Activated CD4-positive, alpha-beta memory T cell treated with anti-CD3 and anti-CD28 coated beads, Interleukin-2, amount 10 ng/mL, durations not matched to agents 7 days and 5 days (primary cell): ENCODE measurements at regions of chr21 and their contacts with region 1.

Region 1: DNA sequence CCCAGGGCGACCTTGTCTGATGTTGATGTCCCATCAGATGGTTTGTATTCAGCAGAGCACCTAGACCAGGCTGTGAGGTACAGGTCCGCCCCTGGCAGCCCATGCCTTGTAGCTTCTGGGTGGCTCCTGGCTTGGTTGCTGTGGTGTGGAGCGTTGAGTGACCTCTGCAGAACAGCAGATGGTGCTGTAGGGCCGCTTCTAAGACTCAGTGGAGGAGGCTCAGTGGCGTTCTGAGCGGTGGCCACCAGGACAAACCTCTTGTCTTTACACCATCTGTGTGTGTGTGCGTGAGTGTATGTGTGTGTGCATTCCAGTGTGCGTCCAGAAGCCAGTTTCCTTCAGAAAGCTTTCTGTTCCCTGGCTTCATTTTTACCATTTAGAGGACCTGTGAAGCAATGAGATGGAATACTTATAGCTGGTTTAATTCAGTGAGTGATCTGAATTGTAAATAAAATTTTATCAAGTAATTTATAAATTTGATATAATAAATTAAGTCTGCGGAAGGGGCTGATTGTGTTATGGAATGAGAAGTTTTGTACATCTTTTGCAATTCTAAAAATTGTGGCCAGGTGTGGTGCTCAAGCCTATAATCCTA is 66.1 kb downstream of the ADARB1 start:
- DNase-seq: peak; percentile 82
- H3K4me3 Mint-ChIP-seq: no peak overlapping the region
- H3K27ac Mint-ChIP-seq: no peak overlapping the region
- H3K4me1 Mint-ChIP-seq: peaks cover 16% of the 10 kb centered on the region
- H3K27me3 Mint-ChIP-seq: no peaks in the 10 kb centered on the region

Region 2: DNA sequence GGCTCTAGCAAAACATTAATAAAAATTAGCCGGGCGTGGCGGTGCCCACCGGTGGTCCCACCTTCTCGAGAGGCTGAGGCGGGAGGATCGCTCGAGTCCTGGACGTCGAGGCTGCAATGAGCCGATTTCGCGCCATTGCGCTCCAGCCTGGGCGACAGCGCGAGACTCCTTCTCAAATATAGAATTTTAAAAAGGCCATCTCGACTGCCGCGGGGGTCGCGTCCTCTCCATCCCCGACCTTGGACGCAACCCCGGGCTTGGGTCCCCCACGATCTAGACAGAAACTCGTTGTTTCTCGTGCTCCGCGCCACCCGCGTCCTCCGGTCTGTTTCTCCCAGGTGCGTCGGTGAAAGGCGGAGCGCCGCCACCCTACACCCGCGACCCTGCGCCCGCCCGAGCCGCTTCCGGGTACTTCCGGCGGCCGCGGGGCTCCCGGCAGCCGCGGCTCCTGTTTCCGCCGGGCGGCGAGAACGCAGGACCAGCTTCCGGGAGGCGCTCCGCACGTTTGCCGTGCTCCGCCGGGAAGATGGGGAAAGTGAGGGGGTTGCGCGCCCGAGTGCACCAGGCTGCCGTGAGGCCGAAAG is 200.8 kb before region 1 on chr21 and contains the start of gene SLX9:
- CTCF ChIA-PET with region 1: interaction called, 178 read pairs
- POLR2A ChIA-PET with region 1: no interaction called
- DNase-seq: peak; percentile 81
- H3K4me3 Mint-ChIP-seq: peak within 1 kb of the TSS; percentile 86
- H3K27ac Mint-ChIP-seq: peak within 1 kb of the TSS; percentile 73
- H3K4me1 Mint-ChIP-seq: peaks cover 53% of the 10 kb centered on the region
- H3K27me3 Mint-ChIP-seq: no peaks in the 10 kb centered on the region
- total RNA-seq, gene SLX9: 42.4 to 47.0 TPM

Region 3: DNA sequence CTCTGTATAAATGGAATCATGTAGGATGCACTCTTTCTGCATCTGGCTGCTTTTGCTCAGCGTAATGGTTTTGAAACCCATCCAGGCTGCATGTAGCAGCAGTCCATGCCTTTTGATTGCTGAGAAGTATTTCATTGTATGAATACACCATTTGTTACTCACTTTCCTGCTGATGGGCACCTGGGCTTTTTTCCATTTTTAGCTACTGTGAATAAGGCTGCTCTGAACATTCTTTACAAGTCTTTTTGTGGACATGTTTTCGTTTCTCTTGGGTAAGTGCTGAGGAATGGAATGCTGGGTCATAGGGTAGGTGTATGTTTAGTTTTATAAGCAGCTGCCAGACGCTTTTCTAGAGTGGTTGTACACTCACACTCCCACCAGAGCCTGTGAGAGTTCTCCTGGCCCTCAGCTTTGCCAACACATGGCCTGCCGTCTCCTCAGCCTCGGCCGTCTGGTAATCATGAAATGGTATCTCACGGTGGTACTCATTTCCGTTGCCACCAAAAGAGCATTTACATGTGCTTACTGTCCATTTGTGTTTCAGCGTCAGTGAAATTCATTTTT is 178.0 kb before region 1 on chr21:
- CTCF ChIA-PET with region 1: interaction called, 19 read pairs
- POLR2A ChIA-PET with region 1: no interaction called
- DNase-seq: no peak
- H3K4me3 Mint-ChIP-seq: no peak overlapping the region
- H3K27ac Mint-ChIP-seq: no peak overlapping the region
- H3K4me1 Mint-ChIP-seq: peaks cover 29% of the 10 kb centered on the region
- H3K27me3 Mint-ChIP-seq: no peaks in the 10 kb centered on the region

Region 4: DNA sequence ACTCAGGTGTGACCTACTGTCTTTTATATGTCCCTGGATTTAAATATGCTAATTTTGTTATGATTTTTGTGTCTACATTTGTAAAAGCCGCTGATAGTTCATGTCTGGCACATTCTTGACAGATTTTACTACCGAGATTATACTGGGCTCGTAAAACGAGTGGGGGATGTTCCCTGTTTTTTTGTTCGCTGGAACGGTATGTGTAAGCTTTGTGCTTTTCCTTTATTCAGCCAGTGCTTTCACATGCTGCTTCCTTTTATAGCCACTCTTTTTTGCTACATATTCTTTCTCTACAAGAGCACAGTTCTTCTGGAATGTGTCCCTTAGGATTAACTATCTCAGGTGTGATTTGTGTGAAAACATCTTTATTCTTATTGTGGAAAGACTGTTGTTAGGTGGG is 19.5 kb before region 1 on chr21:
- CTCF ChIA-PET with region 1: interaction called, 105 read pairs
- POLR2A ChIA-PET with region 1: interaction called, 3 read pairs
- DNase-seq: no peak
- H3K4me3 Mint-ChIP-seq: no peak overlapping the region
- H3K27ac Mint-ChIP-seq: no peak overlapping the region
- H3K4me1 Mint-ChIP-seq: peaks cover 8% of the 10 kb centered on the region
- H3K27me3 Mint-ChIP-seq: no peaks in the 10 kb centered on the region

Region 5: GRCh38 chr21:45152265-45152746 is 11.9 kb after region 1 on chr21:
- CTCF ChIA-PET with region 1: interaction called, 66 read pairs
- POLR2A ChIA-PET with region 1: interaction called, 3 read pairs
- DNase-seq: peak; percentile 74
- H3K4me3 Mint-ChIP-seq: peak overlapping the region; percentile 78
- H3K27ac Mint-ChIP-seq: peak overlapping the region; percentile 83
- H3K4me1 Mint-ChIP-seq: peaks cover 57% of the 10 kb centered on the region
- H3K27me3 Mint-ChIP-seq: no peaks in the 10 kb centered on the region

Region 6: DNA sequence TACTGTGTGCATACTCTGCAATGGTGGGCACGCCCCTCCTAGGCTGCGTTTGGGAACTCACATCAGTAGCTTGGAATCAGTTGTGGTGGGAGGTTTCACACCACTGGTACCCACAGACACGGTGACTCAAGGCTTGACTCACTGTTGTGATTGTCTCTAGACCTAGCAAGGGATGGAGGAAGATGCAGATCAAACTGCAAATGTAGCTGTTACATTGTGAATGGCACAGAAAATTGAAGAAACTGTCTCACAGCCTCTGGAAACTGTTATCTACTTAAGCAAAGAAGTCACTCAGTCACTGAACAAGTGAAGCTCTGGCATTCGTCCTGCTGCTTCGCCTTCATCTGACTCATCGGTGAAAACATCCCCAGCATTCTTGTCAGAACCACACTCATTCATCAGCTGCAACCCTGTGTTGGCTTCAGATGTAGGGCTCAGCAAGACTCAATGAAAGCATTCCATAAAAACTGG is 87.8 kb after region 1 on chr21:
- CTCF ChIA-PET with region 1: interaction called, 12 read pairs
- POLR2A ChIA-PET with region 1: interaction called, 3 read pairs
- DNase-seq: peak; percentile 90
- H3K4me3 Mint-ChIP-seq: peak overlapping the region; percentile 50
- H3K27ac Mint-ChIP-seq: peak overlapping the region; percentile 85
- H3K4me1 Mint-ChIP-seq: peaks cover 75% of the 10 kb centered on the region
- H3K27me3 Mint-ChIP-seq: peaks cover 10% of the 10 kb centered on the region

Region 7: DNA sequence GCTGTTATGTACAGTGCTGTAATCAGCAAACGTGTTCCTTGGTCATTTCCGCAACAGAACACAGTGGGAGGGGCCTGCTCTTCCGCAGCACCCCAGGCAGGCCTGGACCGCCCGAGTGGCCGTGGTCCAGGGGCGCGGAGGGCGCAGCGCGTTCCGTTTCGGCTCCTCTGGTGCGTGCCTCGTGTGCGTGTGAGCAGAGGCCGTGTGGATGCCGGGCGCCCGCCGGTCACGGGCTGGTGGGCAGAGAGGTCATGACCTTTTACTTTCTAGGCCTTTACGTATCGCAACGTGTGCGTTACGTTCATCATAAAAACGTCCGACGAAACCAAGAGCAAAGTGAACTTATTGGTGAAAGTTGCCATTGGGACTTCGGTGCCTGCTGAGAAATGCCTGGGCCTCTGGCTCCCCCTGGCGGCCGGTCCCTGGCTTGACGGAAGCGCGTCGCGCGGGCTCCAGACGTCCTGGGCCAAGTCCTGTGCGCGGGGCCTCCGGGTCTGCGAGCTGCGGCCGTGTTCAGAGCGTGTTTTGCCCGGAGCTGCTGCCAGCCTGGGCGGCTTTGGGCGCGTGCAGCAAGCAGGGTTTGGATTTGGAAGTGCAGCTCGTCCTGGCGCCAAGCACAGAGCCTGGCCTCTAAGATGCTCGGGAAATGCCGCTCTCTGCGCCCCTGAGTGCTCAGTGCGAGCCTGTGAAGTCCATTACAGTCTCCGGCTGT is 298.9 kb after region 1 on chr21:
- CTCF ChIA-PET with region 1: interaction called, 28 read pairs
- POLR2A ChIA-PET with region 1: no interaction called
- DNase-seq: peak; percentile 87
- H3K4me3 Mint-ChIP-seq: peak overlapping the region; percentile 54
- H3K27ac Mint-ChIP-seq: no peak overlapping the region
- H3K4me1 Mint-ChIP-seq: peaks cover 13% of the 10 kb centered on the region
- H3K27me3 Mint-ChIP-seq: peaks cover 4% of the 10 kb centered on the region